Upper lobe of right lung (tissue), 1 donor: ENCODE measurements at regions of chr14 and their contacts with region 1.

Region 1: GRCh38 chr14:75906676-75907280 is 75.0 kb downstream of the TGFB3 start:
- DNase-seq: no peak
- ATAC-seq: peak; percentile 79
- H3K4me3 ChIP-seq: no peak overlapping the region
- H3K27ac ChIP-seq: no peak overlapping the region
- H3K4me1 ChIP-seq: peaks cover 3% of the 10 kb centered on the region
- H3K27me3 ChIP-seq: no peaks in the 10 kb centered on the region
- CTCF ChIP-seq: peak; percentile 95

Region 2: GRCh38 chr14:75979071-75979571 is 72.3 kb after region 1 on chr14:
- intact Hi-C with region 1: loop called (anchors 5 kb)
- DNase-seq: no peak
- ATAC-seq: peak; percentile 4
- H3K4me3 ChIP-seq: peak overlapping the region; percentile 78
- H3K27ac ChIP-seq: no peak overlapping the region
- H3K4me1 ChIP-seq: peaks cover 29% of the 10 kb centered on the region
- H3K27me3 ChIP-seq: no peaks in the 10 kb centered on the region
- CTCF ChIP-seq: peak; percentile 43